Activated CD8-positive, alpha-beta T cell treated with anti-CD3 and anti-CD28 coated beads, Interleukin-2, amount 10 ng/mL, durations not matched to agents 7 days and 5 days (primary cell): ENCODE measurements at regions of chr2 and their contacts with region 1.

Region 1: GRCh38 chr2:20424300-20425290 is 22.3 kb upstream of the RHOB start:
- DNase-seq: peak; percentile 43
- ATAC-seq: peak; percentile 56
- H3K4me3 Mint-ChIP-seq: peak overlapping the region; percentile 6
- H3K27ac Mint-ChIP-seq: peak overlapping the region; percentile 79
- H3K4me1 Mint-ChIP-seq: peaks cover 19% of the 10 kb centered on the region
- H3K27me3 Mint-ChIP-seq: peaks cover 6% of the 10 kb centered on the region

Region 2: DNA sequence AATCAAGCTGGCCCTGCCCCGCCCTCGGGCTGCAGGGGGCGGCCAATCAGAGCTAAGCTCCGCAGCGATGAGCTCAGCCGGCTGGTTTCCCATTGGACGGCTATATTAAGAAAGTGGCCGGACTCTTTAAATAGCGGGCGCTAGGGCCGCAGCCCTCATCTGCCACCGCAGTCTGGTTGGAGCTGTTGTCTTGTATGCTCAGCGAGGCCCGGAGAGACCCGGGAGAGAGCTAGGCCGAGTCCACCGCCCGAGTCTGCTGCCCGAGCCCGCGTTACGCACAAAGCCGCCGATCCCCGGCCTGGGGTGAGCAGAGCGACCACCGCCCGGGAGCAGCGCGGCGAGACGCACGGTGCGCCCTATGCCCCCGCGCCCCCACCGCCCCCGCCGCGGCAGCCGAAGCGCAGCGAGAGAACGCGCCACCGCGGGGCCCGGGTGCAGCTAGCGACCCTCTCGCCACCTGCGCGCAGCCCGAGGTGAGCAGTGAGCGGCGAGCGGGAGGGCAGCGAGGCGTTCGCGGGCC is 22.4 kb after region 1 on chr2 and contains the start of gene RHOB:
- CTCF ChIA-PET with region 1: interaction called, 10 read pairs
- POLR2A ChIA-PET with region 1: interaction called, 3 read pairs
- DNase-seq: peak; percentile 91
- ATAC-seq: peak; percentile 98
- H3K4me3 Mint-ChIP-seq: peak within 1 kb of the TSS; percentile 63
- H3K27ac Mint-ChIP-seq: peak within 1 kb of the TSS; percentile 43
- H3K4me1 Mint-ChIP-seq: peaks cover 4% of the 10 kb centered on the region
- H3K27me3 Mint-ChIP-seq: peaks cover 39% of the 10 kb centered on the region
- total RNA-seq, gene RHOB: 1.2 to 1.3 TPM